Activated B cell treated with CpG ODN at 0.5 μM for 24 hours (primary cell): ENCODE measurements at regions of chr10 and their contacts with region 1.

Region 1: DNA sequence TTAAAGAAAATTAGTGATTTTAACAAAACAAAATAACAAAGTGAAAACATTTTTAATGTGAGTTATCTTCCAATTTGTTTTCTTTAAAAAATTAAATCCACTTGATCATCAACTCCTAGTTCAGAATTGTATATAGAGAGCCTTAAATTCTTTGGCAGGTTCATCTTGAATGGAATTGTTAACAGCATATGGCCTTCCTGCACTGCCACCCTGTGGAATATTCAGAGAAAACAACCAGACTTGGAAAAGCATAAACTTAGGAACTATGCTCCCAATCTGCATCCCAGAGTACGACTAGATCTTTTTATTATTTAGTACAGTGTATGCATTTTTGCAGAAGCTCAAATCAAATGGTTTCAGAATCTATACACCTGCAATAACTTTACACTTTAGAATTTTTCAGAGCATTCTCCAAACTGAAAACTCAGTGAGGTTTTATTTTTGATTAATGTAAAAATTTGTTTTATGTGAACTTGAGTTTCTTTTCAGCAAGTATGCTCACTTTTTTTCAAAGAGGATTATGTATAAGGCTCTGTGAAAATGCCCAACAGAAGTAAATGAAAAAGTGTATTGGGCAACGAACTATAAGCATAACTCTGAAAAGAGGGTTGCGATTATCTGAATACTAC is 44.9 kb upstream of the ANK3 start:
- DNase-seq: no peak
- ATAC-seq: no peak
- H3K4me3 Mint-ChIP-seq: no peak overlapping the region
- H3K27ac Mint-ChIP-seq: no peak overlapping the region
- H3K4me1 Mint-ChIP-seq: peaks cover 5% of the 10 kb centered on the region
- H3K27me3 Mint-ChIP-seq: no peaks in the 10 kb centered on the region
- CTCF ChIP-seq: peak; percentile 49

Region 2: GRCh38 chr10:58781873-58782488 is 1652.6 kb before region 1 on chr10:
- CTCF ChIA-PET with region 1: no interaction called
- POLR2A ChIA-PET with region 1: no interaction called
- intact Hi-C with region 1: loop called (anchors 10 kb)
- DNase-seq: no peak
- ATAC-seq: no peak
- H3K4me3 Mint-ChIP-seq: no peak overlapping the region
- H3K27ac Mint-ChIP-seq: no peak overlapping the region
- H3K4me1 Mint-ChIP-seq: no peaks in the 10 kb centered on the region
- H3K27me3 Mint-ChIP-seq: no peaks in the 10 kb centered on the region
- CTCF ChIP-seq: no peak

Region 3: GRCh38 chr10:60099998-60100747 is 334.4 kb before region 1 on chr10:
- CTCF ChIA-PET with region 1: interaction called, 6 read pairs
- POLR2A ChIA-PET with region 1: no interaction called
- intact Hi-C with region 1: loop called (anchors 1 kb)
- DNase-seq: no peak
- ATAC-seq: no peak
- H3K4me3 Mint-ChIP-seq: no peak overlapping the region
- H3K27ac Mint-ChIP-seq: no peak overlapping the region
- H3K4me1 Mint-ChIP-seq: no peaks in the 10 kb centered on the region
- H3K27me3 Mint-ChIP-seq: no peaks in the 10 kb centered on the region
- CTCF ChIP-seq: peak; percentile 70

Region 4: DNA sequence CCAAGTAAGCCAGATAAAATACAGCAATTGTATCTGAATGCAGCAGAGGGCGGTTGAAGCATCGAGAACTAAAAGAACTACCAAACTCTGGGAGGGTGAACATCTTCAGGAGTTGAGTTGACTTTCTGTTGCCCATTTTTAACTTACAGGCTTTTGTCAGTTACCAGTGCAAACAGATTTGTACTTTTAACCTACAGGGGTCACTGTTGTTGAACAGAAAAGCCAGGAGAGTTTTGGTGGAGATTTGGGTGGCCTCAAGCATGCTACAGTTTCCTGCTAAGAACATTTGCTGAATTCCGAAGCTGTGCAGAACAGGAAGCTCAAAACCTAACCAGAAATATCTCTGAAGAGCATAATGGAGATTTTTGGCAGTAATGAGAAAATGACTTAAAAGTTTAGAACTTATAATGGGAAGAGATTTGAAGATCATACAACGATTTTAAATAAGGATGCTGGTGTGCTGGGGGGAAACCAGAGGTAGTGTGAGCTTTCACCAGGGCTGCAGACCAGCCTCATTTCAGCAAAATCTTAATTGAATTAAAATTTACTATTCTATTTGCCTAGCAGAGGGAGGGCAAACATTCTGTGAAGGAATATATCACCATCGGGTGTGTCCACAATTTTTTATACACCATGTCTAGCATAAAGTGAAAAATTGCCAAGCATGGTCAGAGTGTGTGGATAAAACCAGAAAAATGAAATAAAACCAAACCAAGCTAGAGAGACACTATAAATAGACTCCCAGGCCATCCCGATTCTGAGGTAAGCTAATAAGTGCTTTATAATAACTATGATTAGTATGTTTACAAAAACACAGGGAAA is 319.6 kb before region 1 on chr10:
- CTCF ChIA-PET with region 1: interaction called, 10 read pairs
- POLR2A ChIA-PET with region 1: no interaction called
- intact Hi-C with region 1: loop called (anchors 1 kb)
- DNase-seq: no peak
- ATAC-seq: peak; percentile 64
- H3K4me3 Mint-ChIP-seq: no peak overlapping the region
- H3K27ac Mint-ChIP-seq: no peak overlapping the region
- H3K4me1 Mint-ChIP-seq: no peaks in the 10 kb centered on the region
- H3K27me3 Mint-ChIP-seq: no peaks in the 10 kb centered on the region
- CTCF ChIP-seq: no peak

Region 5: GRCh38 chr10:60335708-60336107 is 98.8 kb before region 1 on chr10:
- CTCF ChIA-PET with region 1: interaction called, 8 read pairs
- POLR2A ChIA-PET with region 1: no interaction called
- intact Hi-C with region 1: loop called (anchors 1 kb)
- DNase-seq: no peak
- ATAC-seq: no peak
- H3K4me3 Mint-ChIP-seq: no peak overlapping the region
- H3K27ac Mint-ChIP-seq: no peak overlapping the region
- H3K4me1 Mint-ChIP-seq: no peaks in the 10 kb centered on the region
- H3K27me3 Mint-ChIP-seq: no peaks in the 10 kb centered on the region
- CTCF ChIP-seq: no peak

Region 6: DNA sequence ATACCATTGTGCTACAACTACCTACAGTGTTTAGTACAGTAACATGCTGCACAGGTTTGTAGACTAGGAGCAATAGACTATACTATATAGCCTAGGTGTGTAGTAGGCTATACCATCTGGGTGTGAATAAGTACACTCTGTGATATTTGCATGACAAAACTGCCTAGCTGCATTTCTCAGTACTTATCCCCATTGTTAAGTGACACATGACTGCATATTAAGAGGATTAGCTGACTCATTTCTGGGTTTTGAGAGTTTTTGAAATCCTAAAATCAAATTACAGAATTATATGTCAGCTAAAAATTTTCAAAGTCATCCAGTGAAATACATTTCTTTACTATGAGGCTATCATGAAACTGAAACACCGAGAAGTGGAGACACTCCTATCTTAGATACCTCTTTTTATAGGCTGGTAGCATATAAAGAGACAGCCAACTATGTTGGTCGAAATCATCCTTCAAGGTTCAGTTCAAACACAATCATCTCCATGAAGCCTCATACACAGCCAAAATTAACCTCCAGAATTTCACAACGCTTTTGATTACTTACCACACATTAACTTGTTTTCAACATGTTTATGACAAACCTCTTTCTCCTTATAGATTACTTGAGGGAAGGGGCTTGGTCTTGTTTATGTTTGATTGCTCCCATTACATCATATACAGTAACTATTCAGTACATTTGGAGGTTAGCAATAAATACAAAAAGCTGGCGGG is 44.9 kb after region 1 on chr10:
- CTCF ChIA-PET with region 1: no interaction called
- POLR2A ChIA-PET with region 1: no interaction called
- intact Hi-C with region 1: no loop called
- DNase-seq: no peak
- ATAC-seq: no peak
- H3K4me3 Mint-ChIP-seq: no peak overlapping the region
- H3K27ac Mint-ChIP-seq: no peak overlapping the region
- H3K4me1 Mint-ChIP-seq: no peaks in the 10 kb centered on the region
- H3K27me3 Mint-ChIP-seq: no peaks in the 10 kb centered on the region
- CTCF ChIP-seq: no peak